ENCODE measurements at regions of chr3 and their contacts with region 1.

Region 1: GRCh38 chr3:124928333-124929202 is 6.0 kb downstream of the MUC13 start:
- H3K4me3 Mint-ChIP-seq: no peak overlapping the region
- H3K27ac Mint-ChIP-seq: peak overlapping the region; percentile 63
- H3K4me1 Mint-ChIP-seq: peaks cover 31% of the 10 kb centered on the region
- H3K27me3 Mint-ChIP-seq: peaks cover 6% of the 10 kb centered on the region

Region 2: DNA sequence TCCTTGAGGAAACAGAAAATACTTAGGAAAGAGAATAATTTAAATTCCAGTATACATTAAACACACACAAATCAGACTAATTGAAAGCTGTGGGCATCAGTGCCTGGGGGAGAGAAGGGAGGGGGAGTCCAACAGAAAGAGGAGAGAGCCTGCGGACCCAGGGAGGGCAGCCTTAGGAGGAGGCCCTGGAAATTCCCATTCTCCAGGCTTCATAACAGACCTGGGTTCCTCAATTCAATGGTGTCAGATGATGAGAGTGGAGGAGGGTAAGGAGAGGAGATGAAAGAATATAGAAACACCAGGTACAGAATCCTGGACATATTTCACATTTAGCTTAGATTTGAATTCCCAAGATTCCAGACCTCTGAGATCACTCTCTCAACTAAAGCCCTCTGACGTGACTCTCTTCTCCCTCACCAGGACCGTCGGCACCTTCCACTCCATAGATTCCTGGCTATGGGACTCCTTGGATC is 518.7 kb before region 1 on chr3:
- intact Hi-C with region 1: no loop called
- H3K4me3 Mint-ChIP-seq: no peak overlapping the region
- H3K27ac Mint-ChIP-seq: no peak overlapping the region
- H3K4me1 Mint-ChIP-seq: no peaks in the 10 kb centered on the region
- H3K27me3 Mint-ChIP-seq: peaks cover 4% of the 10 kb centered on the region

Region 3: GRCh38 chr3:124965413-124965812 is 36.8 kb after region 1 on chr3:
- intact Hi-C with region 1: loop called (anchors 5 kb)
- H3K4me3 Mint-ChIP-seq: no peak overlapping the region
- H3K27ac Mint-ChIP-seq: peak overlapping the region; percentile 93
- H3K4me1 Mint-ChIP-seq: peaks cover 76% of the 10 kb centered on the region
- H3K27me3 Mint-ChIP-seq: no peaks in the 10 kb centered on the region

Region 4: GRCh38 chr3:124986158-124987143 is 57.9 kb after region 1 on chr3:
- intact Hi-C with region 1: loop called (anchors 1 kb)
- H3K4me3 Mint-ChIP-seq: no peak overlapping the region
- H3K27ac Mint-ChIP-seq: peak overlapping the region; percentile 87
- H3K4me1 Mint-ChIP-seq: peaks cover 46% of the 10 kb centered on the region
- H3K27me3 Mint-ChIP-seq: no peaks in the 10 kb centered on the region

Region 5: GRCh38 chr3:125165189-125165947 is 236.8 kb after region 1 on chr3:
- intact Hi-C with region 1: loop called (anchors 10 kb)
- H3K4me3 Mint-ChIP-seq: no peak overlapping the region
- H3K27ac Mint-ChIP-seq: peak overlapping the region; percentile 8
- H3K4me1 Mint-ChIP-seq: peaks cover 55% of the 10 kb centered on the region
- H3K27me3 Mint-ChIP-seq: peaks cover 6% of the 10 kb centered on the region

Measured in dendritic cell treated with granulocyte-macrophage colony-stimulating factor and Interleukin-4, amounts not matched to agents 40 ng/mL and 50 ng/mL, for 4 days (primary cell).